Activated CD8-positive, alpha-beta memory T cell treated with anti-CD3 and anti-CD28 coated beads, Interleukin-2, amount 10 ng/mL, durations not matched to agents 7 days and 5 days (primary cell): ENCODE measurements at regions of chr14 and their contacts with region 1.

Region 1: GRCh38 chr14:23120541-23121251 is 1.6 kb upstream of the CEBPE start:
- DNase-seq: peak; percentile 91
- ATAC-seq: peak; percentile 84
- H3K4me3 Mint-ChIP-seq: peak overlapping the region; percentile 22
- H3K27ac Mint-ChIP-seq: peak overlapping the region; percentile 91
- H3K4me1 Mint-ChIP-seq: peaks cover 35% of the 10 kb centered on the region
- H3K27me3 Mint-ChIP-seq: no peaks in the 10 kb centered on the region

Region 2: GRCh38 chr14:23068476-23069412 is 52.0 kb before region 1 on chr14:
- CTCF ChIA-PET with region 1: interaction called, 29 read pairs
- DNase-seq: peak; percentile 85
- ATAC-seq: peak; percentile 75
- H3K4me3 Mint-ChIP-seq: peak overlapping the region; percentile 48
- H3K27ac Mint-ChIP-seq: peak overlapping the region; percentile 50
- H3K4me1 Mint-ChIP-seq: peaks cover 34% of the 10 kb centered on the region
- H3K27me3 Mint-ChIP-seq: no peaks in the 10 kb centered on the region

Region 3: DNA sequence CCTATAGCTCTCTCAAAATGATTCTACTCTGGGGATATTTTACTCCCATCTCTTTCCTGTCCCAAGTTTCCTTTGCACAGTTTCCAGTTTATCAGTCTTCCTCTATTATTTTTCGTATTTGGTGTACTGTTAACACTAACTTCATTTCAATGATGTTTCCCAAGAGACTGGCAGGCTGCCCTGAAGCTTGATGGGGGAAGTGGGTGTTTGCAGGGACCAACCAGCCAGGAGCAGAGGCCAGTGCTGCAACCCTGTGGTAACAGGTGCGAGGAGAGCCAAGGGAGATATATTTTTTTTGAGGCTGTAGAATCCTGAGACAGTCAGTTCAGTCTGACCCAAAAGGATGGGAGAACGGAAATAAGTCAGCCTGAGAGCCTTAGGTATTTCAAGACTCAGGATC is 10.2 kb after region 1 on chr14:
- CTCF ChIA-PET with region 1: interaction called, 36 read pairs
- DNase-seq: no peak
- ATAC-seq: no peak
- H3K4me3 Mint-ChIP-seq: no peak overlapping the region
- H3K27ac Mint-ChIP-seq: no peak overlapping the region
- H3K4me1 Mint-ChIP-seq: peaks cover 9% of the 10 kb centered on the region
- H3K27me3 Mint-ChIP-seq: peaks cover 7% of the 10 kb centered on the region

Region 4: DNA sequence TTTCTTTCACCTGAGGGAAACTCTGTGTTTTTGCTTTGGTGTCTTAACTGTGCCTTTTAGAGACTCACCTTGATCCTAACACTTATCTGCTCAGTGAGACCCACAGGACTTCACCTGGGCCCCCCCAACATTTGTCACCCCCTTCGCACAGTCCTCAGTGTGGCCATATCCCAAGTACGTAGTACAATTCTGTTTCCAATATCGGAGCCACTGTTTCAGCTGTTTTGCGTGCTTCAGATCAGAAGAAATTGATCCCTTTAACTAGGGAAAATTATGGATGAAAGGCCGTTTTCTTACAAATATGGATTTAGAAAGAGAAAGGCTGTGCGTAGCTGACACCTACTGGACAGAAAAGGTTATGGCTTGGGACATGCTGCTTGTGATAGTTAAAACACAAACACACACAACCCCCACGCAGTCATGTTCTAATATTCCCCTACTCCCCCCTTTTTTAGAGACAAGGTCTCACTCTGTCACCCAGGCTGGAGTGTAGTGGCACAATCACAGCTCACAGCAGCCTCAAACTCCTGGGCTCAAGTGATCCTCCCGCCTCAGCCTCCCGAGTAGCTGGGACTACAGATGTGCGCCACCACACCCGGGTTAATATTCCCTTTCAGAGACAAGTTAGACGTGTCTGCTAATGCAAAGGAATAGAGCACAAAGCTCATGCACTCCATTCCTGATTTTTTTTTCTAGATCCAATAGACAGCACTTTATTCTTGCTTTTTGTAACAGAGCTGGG is 66.4 kb after region 1 on chr14:
- CTCF ChIA-PET with region 1: interaction called, 285 read pairs
- DNase-seq: no peak
- ATAC-seq: no peak
- H3K4me3 Mint-ChIP-seq: no peak overlapping the region
- H3K27ac Mint-ChIP-seq: no peak overlapping the region
- H3K4me1 Mint-ChIP-seq: no peaks in the 10 kb centered on the region
- H3K27me3 Mint-ChIP-seq: peaks cover 8% of the 10 kb centered on the region

Region 5: GRCh38 chr14:23294734-23295561 is 174.3 kb after region 1 on chr14:
- CTCF ChIA-PET with region 1: interaction called, 51 read pairs
- DNase-seq: peak; percentile 65
- ATAC-seq: peak; percentile 83
- H3K4me3 Mint-ChIP-seq: no peak overlapping the region
- H3K27ac Mint-ChIP-seq: peak overlapping the region; percentile 57
- H3K4me1 Mint-ChIP-seq: peaks cover 18% of the 10 kb centered on the region
- H3K27me3 Mint-ChIP-seq: no peaks in the 10 kb centered on the region

Region 6: DNA sequence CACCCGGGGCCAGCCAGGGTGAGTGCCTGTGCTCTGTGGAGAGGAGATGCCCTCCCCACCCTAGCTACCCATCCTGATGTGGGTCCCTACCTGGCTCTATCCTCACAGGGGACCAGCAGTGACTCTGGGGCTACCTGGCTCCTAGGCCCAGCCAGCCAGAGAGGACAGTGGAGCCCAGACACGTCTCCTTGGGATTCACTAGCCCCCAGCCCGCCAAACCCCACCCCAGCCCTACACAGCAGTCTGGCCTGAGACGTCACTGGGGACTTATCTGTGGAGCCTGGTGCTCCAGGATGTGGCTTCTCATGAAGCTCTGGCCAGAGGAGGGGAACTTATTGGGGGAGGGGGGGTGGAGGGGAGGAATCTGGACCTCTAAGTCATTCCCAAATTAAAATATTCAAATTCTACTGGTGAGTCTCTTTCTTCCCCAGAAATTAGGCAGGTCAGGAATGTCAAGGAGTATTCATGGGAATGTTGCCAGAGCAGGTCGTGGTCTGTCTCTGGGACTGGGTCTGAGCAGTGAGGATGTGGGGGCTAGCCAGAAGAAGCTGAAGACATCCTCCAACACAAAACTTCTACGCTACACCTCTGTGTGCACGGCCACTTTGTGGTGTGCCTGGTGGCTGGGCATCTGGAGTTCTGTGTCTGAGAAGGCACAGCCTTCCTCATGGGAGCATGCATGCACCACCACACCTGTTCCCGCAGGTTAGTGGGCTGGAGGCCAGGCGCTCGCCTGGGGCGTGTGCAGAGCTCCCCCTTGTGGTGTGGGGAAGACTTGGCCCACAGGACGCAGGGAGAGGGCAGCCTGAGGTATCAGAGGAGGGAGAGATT is 258.9 kb after region 1 on chr14:
- CTCF ChIA-PET with region 1: interaction called, 21 read pairs
- DNase-seq: peak; percentile 71
- ATAC-seq: peak; percentile 86
- H3K4me3 Mint-ChIP-seq: no peak overlapping the region
- H3K27ac Mint-ChIP-seq: no peak overlapping the region
- H3K4me1 Mint-ChIP-seq: peaks cover 8% of the 10 kb centered on the region
- H3K27me3 Mint-ChIP-seq: peaks cover 7% of the 10 kb centered on the region